ENCODE measurements at regions of chr1 and their contacts with region 1.

Region 1: GRCh38 chr1:180631766-180632325 is at the start of gene XPR1:
- DNase-seq: peak; percentile 99
- total RNA-seq, gene XPR1: 147 TPM

Region 2: GRCh38 chr1:180515864-180516388 is 115.9 kb before region 1 on chr1:
- intact Hi-C with region 1: loop called (anchors 5 kb)
- DNase-seq: no peak

Region 3: GRCh38 chr1:180533266-180533987 is 98.4 kb before region 1 on chr1:
- intact Hi-C with region 1: loop called (anchors 2 kb)
- DNase-seq: no peak

Region 4: DNA sequence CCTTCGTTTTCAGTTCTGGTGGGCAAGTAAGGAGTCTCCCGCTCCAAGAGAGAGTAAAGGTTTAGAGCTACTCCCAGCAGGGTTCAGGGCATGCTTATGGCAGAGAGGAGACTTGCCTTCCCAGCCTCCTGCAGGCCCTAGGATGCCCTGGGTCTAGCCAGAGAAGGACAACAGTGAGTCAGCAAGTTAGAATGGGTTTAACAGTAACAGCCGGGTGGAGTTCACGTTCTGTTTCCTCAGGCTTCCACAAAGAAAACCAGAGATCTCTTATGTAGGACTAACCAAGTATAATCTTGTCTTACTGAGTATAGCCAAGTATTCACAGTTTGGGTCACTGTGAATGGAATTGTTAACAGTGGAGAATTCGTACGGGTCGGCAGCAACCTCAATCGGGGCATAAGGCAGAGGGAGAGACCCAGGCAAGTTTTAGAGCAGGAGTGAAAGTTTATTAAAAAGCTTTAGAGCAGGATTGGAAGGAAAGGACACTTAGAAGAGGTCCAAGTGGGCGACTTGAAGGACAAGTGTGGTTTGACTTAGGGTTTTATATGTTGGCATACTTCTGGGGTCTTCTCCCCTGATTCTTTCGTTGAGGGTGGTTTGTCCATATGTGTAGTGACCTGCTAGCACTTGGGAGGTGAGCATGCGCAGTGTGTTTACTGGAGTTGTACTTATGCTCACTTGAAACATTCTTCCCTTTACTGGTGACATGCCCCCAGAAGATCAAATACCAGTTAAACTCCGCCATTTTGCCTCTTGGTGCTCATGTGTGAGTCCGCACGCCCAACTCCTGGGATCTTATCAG is 68.6 kb before region 1 on chr1:
- intact Hi-C with region 1: loop called (anchors 2 kb)
- DNase-seq: no peak

Region 5: GRCh38 chr1:180863158-180863775 is 231.4 kb after region 1 on chr1:
- intact Hi-C with region 1: loop called (anchors 5 kb)
- DNase-seq: no peak

Region 6: DNA sequence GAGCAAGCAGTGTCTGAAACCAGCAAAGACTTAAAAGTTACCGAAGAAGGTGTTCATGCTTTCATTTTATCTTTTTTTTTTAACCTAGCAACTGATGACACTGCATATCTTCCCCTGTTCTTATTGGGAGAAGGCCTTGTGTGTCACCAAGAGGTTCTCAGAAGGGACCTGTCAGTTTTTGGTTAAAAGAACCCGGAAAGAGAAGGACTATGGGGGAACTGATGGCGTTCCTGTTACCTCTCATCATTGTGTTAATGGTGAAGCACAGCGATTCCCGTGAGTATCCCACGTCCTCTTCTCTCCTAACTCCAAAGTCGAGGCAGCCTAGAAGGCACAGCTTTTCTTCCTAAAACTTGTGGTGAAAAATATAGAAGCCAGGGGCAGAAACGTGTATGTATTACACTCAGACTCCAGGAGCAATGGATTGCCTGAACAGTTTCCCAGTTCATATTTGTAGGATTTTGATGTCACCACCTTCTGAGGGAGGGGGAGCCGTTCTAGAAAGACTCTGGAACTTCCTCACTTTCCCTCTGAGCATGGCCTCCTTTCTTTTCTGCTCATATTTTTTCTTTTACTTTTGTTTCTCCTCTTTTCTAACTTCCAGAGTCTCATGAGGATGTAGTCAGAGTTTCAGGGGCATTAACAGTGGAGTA is 402.1 kb after region 1 on chr1 and contains the start of gene MR1:
- intact Hi-C with region 1: loop called (anchors 10 kb)
- DNase-seq: no peak
- total RNA-seq, gene MR1: 4.6 TPM

Region 7: GRCh38 chr1:181152892-181153633 is 521.2 kb after region 1 on chr1:
- intact Hi-C with region 1: loop called (anchors 10 kb)
- DNase-seq: peak; percentile 90